Mammary epithelial cell (primary cell): ENCODE measurements at regions of chr2 and their contacts with region 1.

Region 1: DNA sequence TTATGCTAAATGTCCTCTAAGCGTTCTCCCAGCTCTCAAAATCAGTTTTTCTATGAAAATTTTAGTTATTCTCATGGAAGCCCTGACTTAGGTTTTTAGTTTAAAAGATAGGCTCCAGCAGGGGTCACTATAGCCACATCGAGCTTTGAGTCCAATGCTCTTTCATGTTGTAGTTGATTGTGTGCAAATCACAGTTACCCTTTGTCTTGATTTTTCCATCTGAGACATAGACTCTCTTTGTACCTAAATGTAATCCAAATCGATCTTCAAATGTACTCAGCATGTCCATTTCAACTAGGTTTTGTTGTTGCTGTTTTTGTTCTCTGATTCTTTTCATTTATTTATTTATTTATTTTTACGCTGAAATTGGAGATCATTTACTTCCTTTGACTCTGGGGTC is 26.4 kb upstream of the MSTN start:
- DNase-seq: peak; percentile 47
- H3K4me3 ChIP-seq: no peak overlapping the region
- H3K27ac ChIP-seq: no peak overlapping the region
- H3K4me1 ChIP-seq: no peaks in the 10 kb centered on the region
- H3K27me3 ChIP-seq: no peaks in the 10 kb centered on the region
- CTCF ChIP-seq: peak; percentile 71 to 72

Region 2: GRCh38 chr2:189952536-189953109 is 136.3 kb before region 1 on chr2:
- CTCF ChIA-PET with region 1: no interaction called
- dilution Hi-C with region 1: no loop called
- in situ Hi-C with region 1: no loop called
- intact Hi-C with region 1: no loop called
- DNase-seq: no peak
- H3K4me3 ChIP-seq: no peak overlapping the region
- H3K27ac ChIP-seq: no peak overlapping the region
- H3K4me1 ChIP-seq: no peaks in the 10 kb centered on the region
- H3K27me3 ChIP-seq: no peaks in the 10 kb centered on the region
- CTCF ChIP-seq: no peak

Region 3: DNA sequence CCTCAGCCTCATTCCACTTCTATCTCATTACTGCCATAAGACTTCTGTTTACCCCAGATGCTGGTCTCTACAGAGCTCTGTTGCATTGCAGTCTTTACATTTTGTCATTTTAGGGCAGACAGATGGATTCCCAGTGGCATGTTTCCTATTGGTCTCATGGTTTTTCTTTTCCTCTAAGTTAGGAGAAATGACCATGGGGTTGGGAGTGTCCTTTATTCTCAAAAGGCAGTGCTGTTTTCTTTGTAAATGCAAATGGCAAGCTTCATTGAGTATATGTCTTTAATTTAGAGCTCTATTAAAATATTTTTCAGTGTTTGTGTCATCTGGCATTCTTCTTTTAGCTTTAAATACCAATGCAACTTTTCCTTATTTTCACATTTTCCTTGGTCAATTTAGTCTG is 83.4 kb before region 1 on chr2:
- CTCF ChIA-PET with region 1: no interaction called
- dilution Hi-C with region 1: no loop called
- in situ Hi-C with region 1: no loop called
- intact Hi-C with region 1: no loop called
- DNase-seq: no peak
- H3K4me3 ChIP-seq: no peak overlapping the region
- H3K27ac ChIP-seq: no peak overlapping the region
- H3K4me1 ChIP-seq: no peaks in the 10 kb centered on the region
- H3K27me3 ChIP-seq: no peaks in the 10 kb centered on the region
- CTCF ChIP-seq: no peak

Region 4: DNA sequence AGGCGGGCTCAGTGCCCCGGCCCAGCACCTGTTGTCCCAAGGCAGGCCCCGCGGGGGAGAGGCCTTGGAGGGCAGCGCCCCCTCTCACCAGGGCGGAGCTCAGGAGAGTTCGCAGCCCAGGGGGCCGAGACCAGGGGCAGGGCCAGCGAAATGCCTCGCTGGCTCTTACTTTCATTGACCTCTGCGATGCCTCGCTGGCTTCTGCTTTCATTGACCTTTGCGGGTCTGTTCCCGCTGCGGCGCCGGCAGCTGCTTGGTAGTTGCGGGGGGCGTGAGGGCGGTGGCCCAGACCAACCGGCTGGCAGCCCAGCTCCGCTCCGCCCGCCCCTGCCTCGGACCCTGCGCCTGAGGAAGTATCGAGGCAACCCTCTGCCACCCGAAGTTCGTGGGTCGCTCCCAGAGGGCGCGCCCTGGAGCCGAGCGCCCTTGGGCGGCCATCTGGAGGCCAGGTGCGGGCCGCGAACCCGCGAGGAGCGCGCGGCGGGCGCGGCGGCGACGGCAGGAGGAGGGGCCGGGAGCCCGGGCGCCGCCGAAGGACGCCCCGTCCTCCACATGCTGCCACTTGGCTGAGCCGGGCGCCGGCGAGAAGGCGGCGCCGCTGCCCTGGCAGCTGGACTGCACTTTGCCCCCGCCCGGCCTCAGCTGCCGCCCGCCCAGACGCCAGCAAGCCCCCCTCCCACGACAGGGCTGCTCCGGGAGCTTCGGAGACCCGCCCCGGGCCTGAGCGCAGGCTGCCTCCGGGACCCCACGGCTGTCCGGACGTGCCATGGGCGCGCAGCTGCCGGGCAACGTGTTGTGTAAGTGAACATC is 91.6 kb after region 1 on chr2:
- CTCF ChIA-PET with region 1: no interaction called
- dilution Hi-C with region 1: no loop called
- in situ Hi-C with region 1: no loop called
- intact Hi-C with region 1: loop called (anchors 5 kb)
- DNase-seq: no peak
- H3K4me3 ChIP-seq: peak overlapping the region; percentile 28 to 58 (median 53)
- H3K27ac ChIP-seq: no peak overlapping the region
- H3K4me1 ChIP-seq: peaks cover 7% of the 10 kb centered on the region
- H3K27me3 ChIP-seq: no peaks in the 10 kb centered on the region
- CTCF ChIP-seq: peak; percentile 15 to 39

Region 5: GRCh38 chr2:190235101-190235500 is 146.2 kb after region 1 on chr2:
- CTCF ChIA-PET with region 1: no interaction called
- dilution Hi-C with region 1: no loop called
- in situ Hi-C with region 1: no loop called
- intact Hi-C with region 1: no loop called
- DNase-seq: peak; percentile 6
- H3K4me3 ChIP-seq: no peak overlapping the region
- H3K27ac ChIP-seq: no peak overlapping the region
- H3K4me1 ChIP-seq: no peaks in the 10 kb centered on the region
- H3K27me3 ChIP-seq: no peaks in the 10 kb centered on the region
- CTCF ChIP-seq: no peak

Region 6: DNA sequence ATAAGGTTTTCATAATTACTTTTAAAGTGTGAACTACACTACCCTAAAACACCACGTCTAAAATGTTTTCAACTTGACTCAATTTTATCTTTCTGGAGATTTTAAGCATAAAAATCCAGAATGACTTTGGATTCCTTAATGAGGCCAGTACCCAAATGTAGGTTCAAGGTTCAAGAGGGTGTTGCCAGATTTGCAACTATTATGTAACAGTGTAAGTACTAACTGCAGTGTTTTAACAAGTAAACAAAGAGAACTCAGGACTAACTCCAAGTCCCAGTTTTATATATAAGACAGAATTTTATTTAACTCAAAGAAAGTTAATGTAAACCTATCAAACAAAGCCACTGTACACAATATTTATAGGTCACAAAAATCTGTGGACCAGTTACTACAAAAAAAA is 225.0 kb after region 1 on chr2:
- CTCF ChIA-PET with region 1: no interaction called
- dilution Hi-C with region 1: no loop called
- in situ Hi-C with region 1: loop called in 1 of 2 experiments (anchors 25 kb)
- intact Hi-C with region 1: loop called (anchors 1 kb)
- DNase-seq: no peak
- H3K4me3 ChIP-seq: no peak overlapping the region
- H3K27ac ChIP-seq: no peak overlapping the region
- H3K4me1 ChIP-seq: peaks cover 6% of the 10 kb centered on the region
- H3K27me3 ChIP-seq: no peaks in the 10 kb centered on the region
- CTCF ChIP-seq: no peak

Region 7: GRCh38 chr2:190376591-190377245 is 287.8 kb after region 1 on chr2:
- CTCF ChIA-PET with region 1: no interaction called
- dilution Hi-C with region 1: no loop called
- in situ Hi-C with region 1: loop called in 1 of 2 experiments (anchors 10 kb)
- intact Hi-C with region 1: loop called (anchors 1 kb)
- DNase-seq: no peak
- H3K4me3 ChIP-seq: no peak overlapping the region
- H3K27ac ChIP-seq: no peak overlapping the region
- H3K4me1 ChIP-seq: no peaks in the 10 kb centered on the region
- H3K27me3 ChIP-seq: no peaks in the 10 kb centered on the region
- CTCF ChIP-seq: no peak

Region 8: GRCh38 chr2:190804182-190804795 is 715.4 kb after region 1 on chr2:
- CTCF ChIA-PET with region 1: no interaction called
- dilution Hi-C with region 1: no loop called
- in situ Hi-C with region 1: loop called in 1 of 2 experiments (anchors 25 kb)
- intact Hi-C with region 1: loop called (anchors 2 kb)
- DNase-seq: no peak
- H3K4me3 ChIP-seq: no peak overlapping the region
- H3K27ac ChIP-seq: no peak overlapping the region
- H3K4me1 ChIP-seq: no peaks in the 10 kb centered on the region
- H3K27me3 ChIP-seq: no peaks in the 10 kb centered on the region
- CTCF ChIP-seq: peak; percentile 58 to 74